Prostate gland (tissue), 2 donors: ENCODE measurements at regions of chr16 and their contacts with region 1.

Region 1: GRCh38 chr16:2500918-2501750 is 12.6 kb upstream of the ATP6V0C start:
- DNase-seq: peak; percentile 75
- H3K4me3 ChIP-seq: no peak overlapping the region
- H3K27ac ChIP-seq: peak overlapping the region; percentile 7 to 11
- H3K4me1 ChIP-seq: peaks cover 13% of the 10 kb centered on the region
- H3K27me3 ChIP-seq: no peaks in the 10 kb centered on the region
- CTCF ChIP-seq: peak; percentile 94 to 98 (median 98)
- POLR2A ChIP-seq: no peak

Region 2: GRCh38 chr16:2267913-2268666 is 233.0 kb before region 1 on chr16 and contains the start of gene RNPS1:
- intact Hi-C with region 1: loop called (anchors 5 kb)
- DNase-seq: peak; percentile 94
- H3K4me3 ChIP-seq: peak within 1 kb of the TSS; percentile 56 to 68
- H3K27ac ChIP-seq: peak within 1 kb of the TSS; percentile 95 to 97
- H3K4me1 ChIP-seq: peaks cover 7% of the 10 kb centered on the region
- H3K27me3 ChIP-seq: no peaks in the 10 kb centered on the region
- CTCF ChIP-seq: peak in 2 of 4 experiments; percentile 30 to 35
- POLR2A ChIP-seq: peak; percentile 91
- total RNA-seq, gene RNPS1: 163 to 241 TPM

Region 3: DNA sequence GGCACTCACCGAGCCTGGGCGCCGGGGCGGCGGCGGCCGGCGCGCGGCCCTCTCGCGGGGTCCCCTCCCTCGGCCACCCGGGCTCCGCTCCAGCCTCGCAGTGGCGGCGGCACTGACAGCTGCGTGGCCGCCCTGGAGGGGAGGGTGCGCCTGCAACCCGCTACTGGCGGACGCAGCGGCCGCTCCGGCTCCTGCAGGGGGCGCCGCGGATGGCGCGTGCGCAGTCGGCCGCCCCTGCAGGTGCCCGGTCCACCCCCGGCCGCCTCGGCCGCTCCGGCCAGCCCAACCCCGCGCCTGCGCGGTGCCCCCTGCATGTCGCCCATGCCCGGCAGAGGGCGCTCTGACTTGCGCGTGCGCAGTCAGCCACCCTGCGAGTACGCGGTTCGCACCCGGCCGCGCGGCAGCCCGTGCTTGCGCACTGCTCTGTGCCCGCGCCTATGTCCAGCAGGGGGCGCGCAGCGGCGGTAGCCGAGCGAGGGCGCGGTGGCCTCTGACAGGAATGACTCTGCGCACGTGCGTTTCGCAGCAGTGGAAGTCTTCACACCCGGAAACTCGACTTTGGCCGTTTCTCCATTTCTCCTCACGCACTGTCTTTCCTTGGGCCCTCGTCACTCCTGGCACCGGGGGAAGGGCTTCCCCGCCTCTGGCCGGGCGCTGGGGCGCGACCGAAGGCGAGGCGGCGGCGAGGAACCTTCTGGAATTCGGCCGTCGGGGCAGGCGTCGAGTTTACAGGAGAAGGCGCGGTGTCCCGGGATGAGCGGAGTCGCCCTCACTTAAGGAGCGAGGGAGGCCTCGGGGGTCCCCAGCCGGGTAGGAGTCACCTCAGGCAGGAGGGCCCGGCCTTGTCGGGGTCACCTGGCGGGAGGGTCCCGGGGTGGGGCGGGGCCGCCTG is 160.3 kb before region 1 on chr16 and contains the start of gene ABCA3:
- intact Hi-C with region 1: loop called (anchors 2 kb)
- DNase-seq: peak; percentile 88
- H3K4me3 ChIP-seq: peak within 1 kb of the TSS; percentile 62 to 73
- H3K27ac ChIP-seq: peak within 1 kb of the TSS in 1 of 2 donors; percentile 44
- H3K4me1 ChIP-seq: no peaks in the 10 kb centered on the region
- H3K27me3 ChIP-seq: no peaks in the 10 kb centered on the region
- CTCF ChIP-seq: peak; percentile 100
- POLR2A ChIP-seq: no peak
- total RNA-seq, gene ABCA3: 8.2 to 24.7 TPM

Region 4: DNA sequence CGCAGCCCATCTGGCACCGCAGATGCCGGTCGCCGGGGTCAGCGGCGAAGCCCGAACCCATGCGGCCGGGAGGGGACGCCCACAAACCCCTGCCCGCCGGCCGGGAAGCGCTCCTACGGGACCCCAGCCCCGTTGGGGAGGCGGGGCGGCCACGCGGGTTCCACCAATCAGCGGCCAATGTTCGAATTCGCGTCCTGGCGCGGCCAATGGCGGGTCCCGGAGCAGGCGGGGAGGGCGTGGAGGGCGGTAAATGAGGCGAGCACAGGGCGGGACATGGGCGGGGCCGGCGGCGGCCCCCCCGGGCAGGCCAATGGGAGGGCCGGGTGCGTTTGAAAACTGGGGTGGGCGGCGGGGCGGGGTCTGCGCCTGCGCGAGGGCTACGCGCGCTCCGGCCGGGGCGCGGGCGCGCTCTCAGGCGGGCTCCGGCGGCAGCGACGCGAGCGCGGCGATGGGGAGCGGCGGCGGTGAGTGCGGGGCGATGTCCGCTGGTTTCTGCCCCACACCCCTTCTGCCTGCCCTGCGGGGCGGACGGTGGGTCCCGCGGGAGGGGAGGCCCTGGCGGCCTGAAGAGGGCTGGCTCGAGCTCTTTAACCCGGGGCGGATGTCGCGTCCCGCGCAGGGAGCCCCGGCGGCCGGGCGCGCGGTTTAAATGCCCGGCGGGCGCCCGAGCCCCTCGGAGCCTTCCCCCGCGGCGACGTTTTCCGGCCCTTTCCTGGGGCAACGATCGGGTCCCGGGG is 71.9 kb before region 1 on chr16 and contains the start of gene CCNF:
- intact Hi-C with region 1: loop called (anchors 5 kb)
- DNase-seq: peak; percentile 97
- H3K4me3 ChIP-seq: peak within 1 kb of the TSS; percentile 75 to 91
- H3K27ac ChIP-seq: peak within 1 kb of the TSS; percentile 65 to 82
- H3K4me1 ChIP-seq: no peaks in the 10 kb centered on the region
- H3K27me3 ChIP-seq: no peaks in the 10 kb centered on the region
- CTCF ChIP-seq: peak in 1 of 4 experiments; percentile 32
- POLR2A ChIP-seq: peak; percentile 56
- total RNA-seq, gene CCNF: 7.3 to 8.0 TPM